PC-9 (cell line): ENCODE measurements at regions of chr5 and their contacts with region 1.

Region 1: GRCh38 chr5:4700069-4700468 is 440.1 kb upstream of the ADAMTS16 start:
- DNase-seq: peak; percentile 41 to 61
- H3K4me3 ChIP-seq: no peak overlapping the region
- H3K27ac ChIP-seq: no peak overlapping the region
- H3K4me1 ChIP-seq: no peaks in the 10 kb centered on the region
- H3K27me3 ChIP-seq: peaks cover 26% of the 10 kb centered on the region; the same call in 1 of the 2 replicates
- CTCF ChIP-seq: peak; percentile 76

Region 2: GRCh38 chr5:4576161-4576748 is 123.8 kb before region 1 on chr5:
- CTCF ChIA-PET with region 1: no interaction called
- POLR2A ChIA-PET with region 1: no interaction called
- intact Hi-C with region 1: loop called (anchors 10 kb)
- DNase-seq: no peak
- H3K4me3 ChIP-seq: no peak overlapping the region
- H3K27ac ChIP-seq: no peak overlapping the region
- H3K4me1 ChIP-seq: no peaks in the 10 kb centered on the region
- H3K27me3 ChIP-seq: peaks cover 58% of the 10 kb centered on the region
- CTCF ChIP-seq: no peak